ENCODE measurements at regions of chr19 and their contacts with region 1.

Region 1: DNA sequence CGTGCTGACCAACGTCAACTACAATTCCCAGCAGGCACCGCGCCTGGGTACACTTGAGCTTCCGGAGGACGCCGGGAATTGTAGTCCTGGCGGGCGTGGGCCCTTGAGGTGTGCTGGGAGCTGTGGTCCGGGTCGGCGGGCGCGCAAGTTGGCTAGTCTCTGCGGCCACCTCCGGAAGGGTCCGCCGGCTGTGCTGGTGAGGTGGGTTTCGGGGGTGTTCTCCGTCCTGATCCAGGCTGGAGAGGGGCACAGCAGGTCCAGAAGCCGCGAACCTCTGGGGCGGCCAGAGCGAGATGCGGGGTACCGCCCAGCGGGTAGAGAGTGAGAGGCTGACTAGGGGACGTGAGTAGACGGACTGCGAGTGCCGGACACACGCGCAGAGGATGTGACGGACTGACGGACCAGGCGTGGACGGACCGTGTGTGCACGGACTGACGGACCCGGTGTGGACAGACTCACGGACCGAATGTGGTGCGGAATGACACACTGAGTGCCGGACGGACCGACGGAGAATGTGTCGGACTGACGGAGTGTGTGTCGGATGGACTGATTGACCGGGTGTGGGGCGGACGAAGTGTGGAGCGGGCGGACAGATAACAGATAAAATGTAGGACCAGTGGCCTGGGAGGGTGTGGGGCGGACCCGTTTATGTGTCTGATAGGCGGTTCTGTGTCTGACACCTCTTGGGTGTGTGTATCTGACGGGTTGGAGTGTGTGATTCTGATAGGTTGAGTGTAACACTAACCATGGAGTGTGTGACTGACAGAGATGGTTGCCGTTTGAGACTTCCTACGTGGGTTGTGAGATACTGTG is at the start of gene ZSCAN22:
- DNase-seq: peak; percentile 96 to 99 (median 98)

Region 2: DNA sequence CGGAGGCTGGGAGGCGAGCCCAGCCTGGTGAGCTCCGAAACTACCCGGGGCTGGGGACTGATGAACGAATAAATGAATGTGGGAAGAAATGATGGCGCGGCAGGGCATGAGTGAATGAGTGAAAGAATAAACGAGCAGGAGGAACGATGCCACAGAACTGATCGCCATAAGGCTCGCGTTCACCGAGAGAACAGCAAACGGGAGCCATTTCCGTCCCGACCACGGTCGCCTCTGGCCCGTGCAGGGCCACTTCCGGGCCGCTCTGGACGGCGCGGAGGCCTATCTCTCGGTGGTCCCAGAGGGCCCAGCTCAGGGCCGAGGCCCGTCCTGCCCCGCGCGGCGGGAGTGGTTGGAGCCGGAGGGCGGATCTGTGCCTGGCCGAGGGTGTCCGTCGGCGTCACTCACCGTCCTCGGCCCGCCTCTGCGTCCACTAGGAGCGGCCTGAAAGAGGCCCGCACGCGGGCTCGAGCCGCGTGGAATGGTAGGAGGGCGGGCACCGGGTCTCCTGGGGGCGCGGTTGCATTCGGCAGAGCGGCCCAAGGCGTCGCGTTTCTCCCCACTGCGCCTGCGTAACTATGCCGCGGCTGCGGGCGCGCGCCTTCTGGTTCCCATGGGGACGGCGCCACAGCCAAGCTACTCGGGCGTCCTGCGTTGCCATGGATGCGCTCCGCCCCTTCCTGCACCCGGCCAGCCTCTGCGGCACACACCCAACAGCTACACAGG is 35.3 kb after region 1 on chr19 and contains the start of gene ZNF497:
- intact Hi-C with region 1: no loop called
- DNase-seq: peak; percentile 94 to 99 (median 98)

Region 3: DNA sequence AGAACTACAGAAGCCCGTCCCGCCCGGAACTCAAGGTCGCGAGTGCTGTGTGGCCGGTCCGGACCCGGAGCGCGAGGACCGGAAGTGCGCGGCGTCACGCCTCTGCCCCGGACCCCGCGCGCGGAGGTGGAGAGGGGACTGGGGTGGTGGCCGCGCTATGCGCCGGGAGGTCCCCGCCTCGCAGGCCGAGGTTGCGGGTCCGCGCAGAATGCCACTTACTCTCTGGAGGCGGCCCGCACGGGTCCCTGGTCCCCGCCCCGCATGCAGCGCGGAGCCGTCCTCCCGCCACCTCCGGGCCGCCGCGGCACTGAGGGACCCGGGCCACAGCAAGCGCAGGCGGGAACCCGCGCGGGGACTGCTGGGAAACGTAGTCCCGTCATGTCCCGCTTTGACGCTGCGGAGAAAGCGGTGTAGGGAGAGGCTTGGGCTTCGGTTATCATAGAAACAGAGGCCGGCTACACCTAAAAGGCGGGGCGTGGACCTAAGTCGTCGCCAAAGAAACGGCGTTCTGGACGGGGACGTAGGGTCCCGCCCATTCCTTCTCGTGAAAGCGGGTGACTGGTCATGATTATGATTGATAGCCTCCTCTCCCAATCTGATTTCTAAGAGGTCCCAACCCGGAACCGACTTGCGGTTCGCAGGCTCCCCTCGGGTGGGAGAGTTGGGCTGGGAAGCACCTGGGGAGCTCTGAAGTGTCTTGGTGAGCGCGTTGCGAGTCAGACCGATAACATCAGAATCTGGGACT is 53.8 kb after region 1 on chr19 and contains the start of gene ZNF837:
- intact Hi-C with region 1: loop called (anchors 2 kb)
- DNase-seq: peak; percentile 96 to 100 (median 99)

Measured in head of caudate nucleus (tissue), 42 donors.